K562 (cell line): ENCODE measurements at regions of chr3 and their contacts with region 1.

Region 1: DNA sequence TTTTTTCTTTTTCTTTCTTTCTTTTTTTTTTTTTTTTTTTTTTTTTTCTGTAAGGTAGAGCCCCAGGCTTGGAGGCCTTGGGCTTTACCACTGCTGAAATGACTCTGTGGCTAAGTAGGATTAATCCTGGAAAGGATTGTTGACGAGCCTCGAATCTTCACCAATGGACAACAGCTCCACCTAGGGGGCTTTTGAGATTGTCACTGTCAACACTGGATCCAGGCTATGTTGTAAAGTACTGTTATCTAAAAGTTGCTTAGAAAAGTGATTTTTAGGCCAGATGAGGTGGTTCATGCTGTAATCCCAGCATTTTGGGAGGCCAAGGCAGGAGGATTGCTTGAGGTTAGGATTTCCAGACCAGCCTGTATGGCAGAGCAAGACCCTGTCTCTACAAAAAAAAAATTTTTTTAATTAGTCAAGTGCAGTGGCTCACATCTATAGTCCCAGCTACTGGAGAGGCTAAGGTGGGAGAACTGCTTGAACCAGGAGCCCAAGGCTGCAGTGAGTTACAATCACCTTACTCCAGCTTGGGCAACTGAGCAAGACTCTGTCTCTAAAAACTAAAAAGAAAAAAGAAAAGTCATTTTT is 41.6 kb downstream of the KLHL18 start:
- DNase-seq: peak; percentile 77 to 87 (median 80)
- ATAC-seq: peak; percentile 96
- H3K4me3 ChIP-seq: no peak overlapping the region
- H3K27ac ChIP-seq: no peak overlapping the region
- H3K4me1 ChIP-seq: peaks cover 6 to 14% of the 10 kb centered on the region in 2 experiments; a peak in 3 of 5 replicates
- H3K27me3 ChIP-seq: no peaks in the 10 kb centered on the region
- CTCF ChIP-seq: peak; percentile 80 to 95 (median 81)
- EP300 ChIP-seq: no peak
- POLR2A ChIP-seq: no peak
- RAD21 ChIP-seq: peak; percentile 91 to 94

Region 2: GRCh38 chr3:47009225-47010110 is 314.9 kb before region 1 on chr3:
- CTCF ChIA-PET with region 1: no interaction called
- POLR2A ChIA-PET with region 1: interaction called, 3 read pairs
- in situ Hi-C with region 1: no loop called
- intact Hi-C with region 1: loop called (anchors 10 kb)
- DNase-seq: no peak
- ATAC-seq: no peak; the same call in 2 of the 3 replicates
- H3K4me3 ChIP-seq: no peak overlapping the region
- H3K27ac ChIP-seq: no peak overlapping the region
- H3K4me1 ChIP-seq: peaks cover 0 to 14% of the 10 kb centered on the region in 2 experiments; a peak in 1 of 5 replicates
- H3K27me3 ChIP-seq: no peaks in the 10 kb centered on the region
- CTCF ChIP-seq: no peak
- EP300 ChIP-seq: no peak
- POLR2A ChIP-seq: no peak
- RAD21 ChIP-seq: no peak

Region 3: DNA sequence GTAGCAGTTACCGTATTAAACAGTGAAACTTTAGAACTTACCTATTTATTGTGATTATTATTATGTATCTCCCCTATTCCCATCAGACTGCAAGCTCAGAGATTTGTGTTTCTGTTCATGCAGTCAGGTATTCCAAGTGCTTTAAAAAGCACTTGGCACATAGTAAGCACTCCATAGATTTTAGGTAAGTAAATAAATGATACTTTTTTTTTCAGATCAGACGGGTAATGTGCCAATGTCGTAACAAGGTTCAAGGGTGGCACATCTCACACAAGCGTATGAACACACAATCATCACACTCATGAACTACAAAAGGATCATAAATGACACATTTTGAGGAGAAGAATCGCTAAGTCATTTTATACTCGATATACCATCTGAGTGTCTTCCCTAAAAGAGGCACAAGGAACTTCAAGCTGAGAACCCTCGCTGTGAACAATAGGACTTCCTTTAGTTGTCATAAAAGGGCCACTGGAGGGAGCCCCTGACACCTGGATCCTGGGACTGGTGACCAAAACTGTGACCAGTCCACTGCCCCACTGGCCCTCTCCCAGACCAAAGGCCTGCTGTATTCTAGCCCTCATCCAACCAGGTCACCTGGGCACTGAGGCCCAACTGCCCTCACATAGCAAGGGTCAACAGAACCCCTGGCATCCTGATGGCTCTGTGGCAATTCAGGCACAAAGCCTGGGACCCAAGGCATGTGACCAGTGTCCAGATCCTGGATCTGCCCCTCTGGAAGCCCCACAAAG is 73.9 kb before region 1 on chr3:
- CTCF ChIA-PET with region 1: interaction called, 34 read pairs
- POLR2A ChIA-PET with region 1: interaction called, 3 read pairs
- in situ Hi-C with region 1: loop called (anchors 5 kb)
- intact Hi-C with region 1: loop called (anchors 1 kb)
- DNase-seq: peak; percentile 72 to 86 (median 80)
- ATAC-seq: peak; percentile 96
- H3K4me3 ChIP-seq: no peak overlapping the region
- H3K27ac ChIP-seq: no peak overlapping the region; the same call in 2 of the 3 replicates
- H3K4me1 ChIP-seq: peaks cover 4 to 12% of the 10 kb centered on the region in 2 experiments; a peak in 3 of 5 replicates
- H3K27me3 ChIP-seq: no peaks in the 10 kb centered on the region
- CTCF ChIP-seq: peak; percentile 84 to 90 (median 87)
- EP300 ChIP-seq: no peak
- POLR2A ChIP-seq: no peak
- RAD21 ChIP-seq: peak; percentile 87 to 96

Region 4: GRCh38 chr3:47274652-47275051 is 49.7 kb before region 1 on chr3:
- CTCF ChIA-PET with region 1: interaction called, 7 read pairs
- POLR2A ChIA-PET with region 1: no interaction called
- in situ Hi-C with region 1: no loop called
- intact Hi-C with region 1: loop called (anchors 1 kb)
- DNase-seq: no peak
- ATAC-seq: no peak
- H3K4me3 ChIP-seq: no peak overlapping the region
- H3K27ac ChIP-seq: no peak overlapping the region
- H3K4me1 ChIP-seq: no peaks in the 10 kb centered on the region
- H3K27me3 ChIP-seq: no peaks in the 10 kb centered on the region
- CTCF ChIP-seq: no peak
- EP300 ChIP-seq: no peak
- POLR2A ChIP-seq: no peak
- RAD21 ChIP-seq: peak in 1 of 2 experiments; percentile 39; a peak in 2 of 4 replicates

Region 5: DNA sequence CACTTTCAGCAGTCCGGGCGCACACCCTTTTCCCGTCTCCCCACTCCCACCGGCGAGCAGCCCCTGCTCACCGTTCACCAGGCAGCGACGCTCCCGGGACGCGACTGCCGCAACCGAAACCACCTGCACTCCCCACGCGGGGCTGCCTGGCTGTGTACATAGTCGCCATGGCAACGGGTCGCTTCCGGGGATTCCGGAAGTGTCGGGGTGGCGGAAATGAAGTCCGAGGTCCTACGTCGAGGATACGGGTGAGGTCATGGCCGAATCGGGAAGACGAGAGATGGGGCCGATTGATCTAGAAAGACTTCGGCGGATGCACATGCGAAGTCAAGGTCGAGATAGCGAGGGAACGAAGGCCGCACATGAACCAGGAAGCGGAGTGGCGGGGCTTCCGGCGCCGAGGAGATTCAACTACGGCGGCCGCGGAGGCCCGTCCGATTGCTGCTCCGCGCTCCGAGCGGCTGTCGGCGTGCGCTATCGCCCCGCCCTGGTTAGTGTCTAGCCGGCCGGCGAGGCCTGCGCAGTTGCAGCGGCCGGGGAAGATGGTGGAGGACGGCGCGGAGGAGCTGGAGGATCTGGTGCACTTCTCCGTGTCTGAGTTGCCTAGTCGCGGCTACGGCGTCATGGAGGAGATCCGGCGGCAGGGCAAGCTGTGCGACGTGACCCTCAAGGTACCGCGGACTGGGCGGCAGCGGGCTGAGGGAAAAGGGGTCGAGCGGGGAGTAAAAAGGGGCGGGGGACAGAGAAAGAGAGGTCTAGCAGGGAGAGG is 41.8 kb before region 1 on chr3 and contains the starts of genes KIF9 and KLHL18:
- CTCF ChIA-PET with region 1: interaction called, 10 read pairs
- POLR2A ChIA-PET with region 1: interaction called, 3 read pairs
- in situ Hi-C with region 1: loop called (anchors 5 kb)
- intact Hi-C with region 1: loop called (anchors 1 kb)
- DNase-seq: peak; percentile 94 to 99 (median 96)
- ATAC-seq: peak; percentile 93
- H3K4me3 ChIP-seq: peak within 1 kb of the TSS; percentile 82
- H3K27ac ChIP-seq: peak within 1 kb of the TSS; percentile 86
- H3K4me1 ChIP-seq: peaks cover 12 to 14% of the 10 kb centered on the region in 2 experiments
- H3K27me3 ChIP-seq: no peaks in the 10 kb centered on the region
- CTCF ChIP-seq: 0 out of 6 replicates have a peak, but pooled peaks of 1 of the 3 experiments have one; percentile 4
- EP300 ChIP-seq: peak; percentile 36; the same call in 1 of the 2 replicates
- POLR2A ChIP-seq: peak; percentile 90
- RAD21 ChIP-seq: no peak; a peak in 1 of 4 replicates
- polyA plus RNA-seq, gene KIF9: 52.1 to 56.9 TPM
- polyA plus RNA-seq, gene KLHL18: 81.5 to 97.5 TPM